T-cell (primary cell): ENCODE measurements at regions of chr1 and their contacts with region 1.

Region 1: DNA sequence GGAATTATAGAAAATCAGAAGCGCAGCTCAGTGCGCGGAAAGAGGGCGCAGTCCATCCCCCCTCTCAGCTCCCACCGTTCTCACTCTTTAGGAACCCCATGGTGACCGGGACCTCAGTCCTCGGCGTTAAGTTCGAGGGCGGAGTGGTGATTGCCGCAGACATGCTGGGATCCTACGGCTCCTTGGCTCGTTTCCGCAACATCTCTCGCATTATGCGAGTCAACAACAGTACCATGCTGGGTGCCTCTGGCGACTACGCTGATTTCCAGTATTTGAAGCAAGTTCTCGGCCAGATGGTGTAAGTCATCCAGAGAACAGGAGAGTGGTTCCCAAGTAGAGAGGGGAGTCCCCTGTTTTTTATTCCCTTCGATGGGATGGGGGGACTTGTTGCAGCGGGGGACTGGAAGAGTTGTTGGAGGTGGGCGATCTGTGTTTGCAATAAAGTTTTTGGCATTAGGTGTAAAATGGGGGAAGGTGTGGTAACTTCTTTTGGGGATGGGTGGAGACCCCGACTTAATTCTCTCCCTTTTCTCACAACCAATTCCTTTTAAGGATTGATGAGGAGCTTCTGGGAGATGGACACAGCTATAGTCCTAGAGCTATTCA is 620 bp downstream of the PSMB4 start:
- DNase-seq: peak in 8 of 35 experiments; percentile 2 to 35 (median 7)
- ATAC-seq: peak; percentile 7 to 29 (median 18)
- H3K4me3 ChIP-seq: peak overlapping the region; percentile 70 to 72
- H3K4me3 Mint-ChIP-seq: peak overlapping the region; percentile 89 to 100 (median 97)
- H3K27ac ChIP-seq: peak overlapping the region; percentile 94
- H3K27ac Mint-ChIP-seq: peak overlapping the region; percentile 95 to 98
- H3K4me1 ChIP-seq: peaks cover 13 to 17% of the 10 kb centered on the region in 2 experiments
- H3K4me1 Mint-ChIP-seq: peaks cover 28 to 32% (median 32%) of the 10 kb centered on the region in 3 donors
- H3K27me3 ChIP-seq: no peaks in the 10 kb centered on the region
- H3K27me3 Mint-ChIP-seq: no peaks in the 10 kb centered on the region

Region 2: DNA sequence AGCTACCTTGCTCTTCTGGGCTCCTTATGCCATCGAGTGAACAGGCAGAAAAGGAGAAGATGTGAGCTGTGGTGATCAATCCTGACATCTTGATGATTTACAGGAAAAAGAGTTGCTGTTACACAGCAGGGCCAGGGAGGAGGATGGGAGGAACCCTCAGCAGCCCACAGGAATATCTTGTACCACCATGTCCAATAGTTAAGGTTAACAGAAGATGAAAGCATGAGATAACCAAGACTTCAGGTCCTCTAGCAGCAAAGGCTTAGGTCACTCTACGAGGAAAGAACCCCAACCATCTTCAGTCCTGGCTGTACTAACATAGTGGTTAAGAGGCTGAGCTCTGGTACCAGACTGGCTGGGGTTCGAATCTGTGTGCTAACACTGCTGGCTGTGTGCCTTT is 15.4 kb before region 1 on chr1:
- CTCF ChIA-PET with region 1: no interaction called
- POLR2A ChIA-PET with region 1: interaction called in 1 of 2 experiments, 17 read pairs
- DNase-seq: no peak
- ATAC-seq: no peak
- H3K4me3 ChIP-seq: no peak overlapping the region
- H3K4me3 Mint-ChIP-seq: no peak overlapping the region
- H3K27ac ChIP-seq: no peak overlapping the region
- H3K27ac Mint-ChIP-seq: no peak overlapping the region
- H3K4me1 ChIP-seq: no peaks in the 10 kb centered on the region
- H3K4me1 Mint-ChIP-seq: no peaks in the 10 kb centered on the region
- H3K27me3 ChIP-seq: no peaks in the 10 kb centered on the region
- H3K27me3 Mint-ChIP-seq: no peaks in the 10 kb centered on the region

Region 3: GRCh38 chr1:151455231-151455630 is 55.2 kb after region 1 on chr1:
- CTCF ChIA-PET with region 1: no interaction called
- POLR2A ChIA-PET with region 1: interaction called in 1 of 2 experiments, 22 read pairs
- DNase-seq: no peak
- ATAC-seq: no peak
- H3K4me3 ChIP-seq: no peak overlapping the region
- H3K4me3 Mint-ChIP-seq: no peak overlapping the region
- H3K27ac ChIP-seq: no peak overlapping the region
- H3K27ac Mint-ChIP-seq: peak overlapping the region; percentile 71 to 72
- H3K4me1 ChIP-seq: peaks cover 5 to 21% of the 10 kb centered on the region in 2 experiments
- H3K4me1 Mint-ChIP-seq: peaks cover 49 to 52% (median 49%) of the 10 kb centered on the region in 3 donors
- H3K27me3 ChIP-seq: no peaks in the 10 kb centered on the region
- H3K27me3 Mint-ChIP-seq: no peaks in the 10 kb centered on the region